CD4-positive, alpha-beta memory T cell (primary cell): ENCODE measurements at regions of chr6 and their contacts with region 1.

Region 1: DNA sequence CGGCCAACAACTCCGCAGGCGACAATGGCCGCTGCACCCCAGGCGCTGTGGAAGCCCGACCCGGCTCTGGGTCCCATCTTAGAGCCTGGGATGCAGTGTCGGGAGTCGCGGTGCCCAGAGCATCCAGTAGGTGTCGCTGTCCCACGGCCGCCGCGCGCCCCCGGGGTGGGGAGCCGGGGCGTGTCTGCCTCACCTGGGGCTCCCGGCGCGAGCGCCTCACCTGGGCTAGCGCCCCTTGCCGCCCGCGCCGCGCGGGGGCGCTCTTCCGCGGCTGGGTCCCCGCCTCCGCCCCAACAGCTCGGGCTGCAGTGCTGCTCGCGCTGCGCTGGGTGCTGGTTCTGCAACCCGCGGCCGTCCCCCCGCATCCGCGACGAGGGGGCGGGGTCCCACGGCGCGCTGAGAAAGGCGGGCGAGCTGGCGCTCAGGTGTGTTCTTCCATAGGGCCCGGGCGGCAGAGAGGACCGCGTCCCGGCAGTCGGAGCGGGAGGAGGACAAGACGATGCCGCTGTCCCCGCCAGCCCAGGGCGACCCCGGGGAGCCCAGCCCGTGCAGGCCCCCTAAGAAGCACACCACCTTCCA is at the start of gene CRYBG1:
- DNase-seq: peak; percentile 73 to 77 (median 75)
- H3K4me3 ChIP-seq: peak within 1 kb of the TSS; percentile 3 to 52
- H3K4me3 Mint-ChIP-seq: peak within 1 kb of the TSS; percentile 79 to 89 (median 86)
- H3K27ac ChIP-seq: no peak within 1 kb of the TSS
- H3K27ac Mint-ChIP-seq: peak within 1 kb of the TSS in 3 of 7 donors; percentile 15 to 78 (median 53)
- H3K4me1 ChIP-seq: peaks cover 17% of the 10 kb centered on the region
- H3K4me1 Mint-ChIP-seq: peaks cover 4 to 11% (median 9%) of the 10 kb centered on the region in 4 donors
- H3K27me3 ChIP-seq: peaks cover 9% of the 10 kb centered on the region
- H3K27me3 Mint-ChIP-seq: peaks cover 15 to 28% of the 10 kb centered on the region in 2 donors
- total RNA-seq, gene CRYBG1: 45.4 to 47.1 TPM

Region 2: DNA sequence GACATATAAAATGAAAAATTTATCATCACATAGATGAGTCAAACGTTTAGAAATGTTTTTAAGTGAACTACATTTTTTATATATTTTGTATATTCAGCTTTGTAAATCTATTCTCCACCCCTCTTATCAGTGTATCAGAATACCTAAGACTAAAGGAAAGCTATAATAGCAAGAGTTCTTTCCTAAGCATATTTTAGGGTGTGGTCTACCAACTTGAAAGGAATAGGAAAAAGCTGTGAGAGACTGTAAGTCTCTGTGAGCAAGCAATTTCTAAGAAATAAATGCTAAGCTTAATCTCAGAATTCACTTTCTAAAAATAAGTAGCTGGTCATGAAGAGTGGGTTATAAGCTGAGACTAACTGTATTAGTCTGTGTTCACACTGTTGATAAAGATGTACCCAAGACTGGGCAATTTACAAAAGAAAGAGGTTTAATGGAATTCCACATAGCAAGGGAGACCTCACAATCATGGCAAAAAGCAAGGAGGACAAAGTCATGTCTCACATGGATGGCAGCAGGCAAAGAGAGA is 782.3 kb before region 1 on chr6:
- CTCF ChIA-PET with region 1: no interaction called
- POLR2A ChIA-PET with region 1: no interaction called
- intact Hi-C with region 1: no loop called
- DNase-seq: no peak
- H3K4me3 ChIP-seq: no peak overlapping the region
- H3K4me3 Mint-ChIP-seq: no peak overlapping the region
- H3K27ac ChIP-seq: no peak overlapping the region
- H3K27ac Mint-ChIP-seq: no peak overlapping the region
- H3K4me1 ChIP-seq: no peaks in the 10 kb centered on the region
- H3K4me1 Mint-ChIP-seq: peaks cover 0 to 4% (median 2%) of the 10 kb centered on the region in 4 donors
- H3K27me3 ChIP-seq: no peaks in the 10 kb centered on the region
- H3K27me3 Mint-ChIP-seq: peaks cover 4 to 5% of the 10 kb centered on the region in 2 donors

Region 3: DNA sequence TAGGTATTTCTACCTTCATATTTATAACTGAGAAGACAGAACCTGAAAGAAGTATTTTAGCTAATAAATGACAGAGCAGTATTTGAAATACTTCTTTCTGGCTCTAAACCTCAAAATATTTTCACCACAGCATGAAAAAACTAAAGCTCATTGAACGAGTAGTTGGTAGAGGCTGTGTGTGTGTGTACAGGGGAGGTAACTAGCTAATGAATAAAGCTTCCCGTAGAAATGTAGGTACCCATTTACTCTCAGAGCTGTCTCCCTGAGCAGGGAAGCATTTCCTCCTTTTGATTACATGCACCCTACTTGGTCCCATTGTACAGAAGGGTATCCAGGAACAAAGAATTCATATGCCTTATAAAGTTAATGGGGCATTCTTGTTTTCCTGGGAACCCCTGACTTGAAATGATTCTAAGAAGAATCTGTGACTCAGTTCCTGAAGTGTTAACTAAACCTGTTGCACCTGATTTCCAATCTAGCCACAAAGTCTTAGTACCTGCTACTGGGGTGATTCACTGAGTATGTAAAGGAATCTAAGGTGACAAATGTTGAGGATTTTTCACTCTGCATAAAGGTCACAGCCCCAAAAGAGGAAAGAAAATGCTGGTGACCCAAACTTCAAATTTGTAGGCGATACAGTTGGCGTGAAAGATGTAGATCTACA is 12.5 kb after region 1 on chr6:
- CTCF ChIA-PET with region 1: interaction called, 21 read pairs
- POLR2A ChIA-PET with region 1: no interaction called
- intact Hi-C with region 1: no loop called
- DNase-seq: no peak
- H3K4me3 ChIP-seq: no peak overlapping the region
- H3K4me3 Mint-ChIP-seq: no peak overlapping the region
- H3K27ac ChIP-seq: no peak overlapping the region
- H3K27ac Mint-ChIP-seq: no peak overlapping the region
- H3K4me1 ChIP-seq: no peaks in the 10 kb centered on the region
- H3K4me1 Mint-ChIP-seq: no peaks in the 10 kb centered on the region
- H3K27me3 ChIP-seq: no peaks in the 10 kb centered on the region
- H3K27me3 Mint-ChIP-seq: peaks cover 3 to 13% of the 10 kb centered on the region in 2 donors